ENCODE measurements at regions of chr7 and their contacts with region 1.

Region 1: GRCh38 chr7:148962823-148963582 is 65.3 kb downstream of the PDIA4 start:
- DNase-seq: peak; percentile 46
- H3K4me3 Mint-ChIP-seq: peak overlapping the region; percentile 85
- H3K27ac Mint-ChIP-seq: peak overlapping the region; percentile 46
- H3K4me1 Mint-ChIP-seq: peaks cover 33% of the 10 kb centered on the region
- H3K27me3 Mint-ChIP-seq: peaks cover 3% of the 10 kb centered on the region

Region 2: DNA sequence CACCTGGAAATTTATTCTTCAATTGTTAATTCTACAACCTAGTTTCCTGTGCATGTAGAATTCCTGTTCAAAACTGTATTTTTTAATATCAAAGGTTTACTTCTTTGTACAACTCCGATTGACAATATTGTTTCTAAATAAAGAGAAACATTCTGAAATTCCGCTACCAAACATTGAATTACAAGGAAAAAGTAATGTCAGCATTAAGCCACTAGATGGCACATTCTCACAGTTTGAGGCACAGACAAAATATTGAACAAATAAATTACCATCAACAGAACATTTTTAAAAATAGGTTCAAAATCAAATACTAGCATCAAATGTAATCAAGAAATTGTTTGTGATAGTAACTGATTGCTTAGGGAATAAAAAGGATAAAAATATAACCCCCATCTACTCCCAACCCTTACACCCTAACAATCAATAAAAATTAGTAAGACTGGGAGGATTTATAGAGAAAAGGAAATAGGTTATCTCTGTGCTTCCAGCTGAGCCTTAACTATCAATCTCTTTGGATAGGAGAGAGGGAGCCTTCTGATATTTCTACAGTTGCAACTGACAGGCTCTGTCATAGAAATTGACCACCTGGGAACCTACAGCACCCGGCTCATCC is 459.0 kb before region 1 on chr7:
- intact Hi-C with region 1: loop called (anchors 1 kb)
- DNase-seq: no peak
- H3K4me3 Mint-ChIP-seq: no peak overlapping the region
- H3K27ac Mint-ChIP-seq: no peak overlapping the region
- H3K4me1 Mint-ChIP-seq: peaks cover 7% of the 10 kb centered on the region
- H3K27me3 Mint-ChIP-seq: peaks cover 17% of the 10 kb centered on the region

Region 3: DNA sequence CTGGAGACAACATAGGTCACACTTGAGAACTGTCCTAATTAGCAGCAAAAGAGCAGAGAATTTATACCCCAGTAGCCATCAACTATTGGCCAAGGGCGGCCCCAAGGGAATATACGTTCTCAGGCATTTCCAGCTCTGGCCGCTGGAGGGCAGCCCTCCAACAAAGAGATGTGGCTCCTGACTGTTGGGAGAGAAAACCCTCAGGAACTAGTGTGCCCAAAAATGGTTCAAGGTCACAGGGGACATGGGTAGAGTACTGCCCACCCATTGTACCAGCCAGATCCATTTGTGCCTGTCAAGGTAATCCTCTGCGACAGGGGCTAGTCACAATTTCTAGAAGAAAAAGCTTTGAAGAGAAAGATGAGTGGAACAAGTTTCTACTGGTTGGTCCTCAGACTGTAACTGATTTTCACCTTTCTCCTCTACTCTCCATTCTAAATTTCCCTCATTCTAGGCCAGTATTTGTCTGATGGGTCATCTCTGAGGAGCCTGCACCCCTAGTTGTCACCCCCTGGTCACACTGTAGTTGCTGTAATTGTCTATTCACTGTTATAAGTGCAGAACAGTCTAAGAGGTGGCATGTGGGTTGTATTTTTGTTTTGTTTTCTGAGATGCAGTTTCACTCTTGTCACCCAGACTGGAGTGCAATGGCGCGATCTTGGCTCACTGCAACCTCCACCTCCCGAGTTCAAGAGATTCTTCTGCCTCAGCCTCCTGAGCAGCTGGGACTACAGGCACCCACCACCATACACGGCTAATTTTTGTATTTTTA is 387.2 kb before region 1 on chr7:
- intact Hi-C with region 1: loop called (anchors 1 kb)
- DNase-seq: peak; percentile 47
- H3K4me3 Mint-ChIP-seq: no peak overlapping the region
- H3K27ac Mint-ChIP-seq: no peak overlapping the region
- H3K4me1 Mint-ChIP-seq: peaks cover 24% of the 10 kb centered on the region
- H3K27me3 Mint-ChIP-seq: peaks cover 3% of the 10 kb centered on the region

Region 4: DNA sequence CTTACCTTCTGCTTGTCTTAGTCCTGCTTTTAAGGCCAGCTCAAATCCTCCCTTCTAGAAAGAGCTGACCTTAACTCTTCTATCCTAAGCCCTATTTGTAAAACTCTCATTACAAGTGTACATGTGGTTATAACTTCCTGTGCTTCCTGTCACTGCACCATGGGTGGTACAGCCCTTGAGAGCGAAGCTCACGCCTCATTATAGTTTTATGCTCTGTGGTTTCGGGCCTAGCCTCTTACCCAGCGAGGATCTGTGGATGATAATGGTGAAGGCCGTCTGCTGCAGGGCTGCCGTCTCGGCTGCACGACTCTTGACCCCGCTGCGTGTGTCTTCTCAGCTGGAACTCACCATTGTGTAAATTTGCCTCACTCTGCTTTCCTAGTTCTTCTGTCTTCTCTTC is 189.7 kb before region 1 on chr7:
- intact Hi-C with region 1: loop called (anchors 2 kb)
- DNase-seq: peak; percentile 35
- H3K4me3 Mint-ChIP-seq: no peak overlapping the region
- H3K27ac Mint-ChIP-seq: peak overlapping the region; percentile 54
- H3K4me1 Mint-ChIP-seq: peaks cover 30% of the 10 kb centered on the region
- H3K27me3 Mint-ChIP-seq: no peaks in the 10 kb centered on the region

Region 5: DNA sequence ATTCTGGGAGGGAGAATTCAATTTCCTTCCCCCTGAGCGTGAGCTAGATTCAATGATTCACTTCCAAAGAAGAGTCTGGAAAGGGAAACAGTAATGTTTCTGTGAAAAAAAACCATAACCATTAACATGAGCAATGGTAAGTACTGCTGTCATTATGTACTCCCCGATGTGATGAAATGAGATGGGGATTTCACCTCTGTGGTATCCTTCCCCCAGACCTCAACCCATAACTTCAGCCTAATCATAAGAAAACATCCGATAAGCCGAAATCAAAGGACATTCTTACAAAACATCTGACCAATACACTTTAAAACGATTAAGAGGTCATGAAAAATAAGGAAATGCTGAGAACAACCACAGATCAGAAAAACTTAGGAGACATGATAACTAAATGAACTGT is 106.1 kb before region 1 on chr7:
- intact Hi-C with region 1: loop called (anchors 1 kb)
- DNase-seq: no peak
- H3K4me3 Mint-ChIP-seq: peak overlapping the region; percentile 40
- H3K27ac Mint-ChIP-seq: peak overlapping the region; percentile 85
- H3K4me1 Mint-ChIP-seq: peaks cover 46% of the 10 kb centered on the region
- H3K27me3 Mint-ChIP-seq: no peaks in the 10 kb centered on the region

Region 6: GRCh38 chr7:148914208-148914777 is 48.7 kb before region 1 on chr7:
- intact Hi-C with region 1: loop called (anchors 2 kb)
- DNase-seq: peak; percentile 34
- H3K4me3 Mint-ChIP-seq: peak overlapping the region; percentile 77
- H3K27ac Mint-ChIP-seq: peak overlapping the region; percentile 94
- H3K4me1 Mint-ChIP-seq: peaks cover 63% of the 10 kb centered on the region
- H3K27me3 Mint-ChIP-seq: peaks cover 2% of the 10 kb centered on the region

Region 7: GRCh38 chr7:148987010-148987750 is 24.2 kb after region 1 on chr7:
- intact Hi-C with region 1: loop called (anchors 1 kb)
- DNase-seq: peak; percentile 78
- H3K4me3 Mint-ChIP-seq: peak overlapping the region; percentile 94
- H3K27ac Mint-ChIP-seq: peak overlapping the region; percentile 92
- H3K4me1 Mint-ChIP-seq: peaks cover 46% of the 10 kb centered on the region
- H3K27me3 Mint-ChIP-seq: peaks cover 21% of the 10 kb centered on the region

Region 8: GRCh38 chr7:149097088-149097487 is 134.1 kb after region 1 on chr7:
- intact Hi-C with region 1: no loop called
- DNase-seq: no peak
- H3K4me3 Mint-ChIP-seq: no peak overlapping the region
- H3K27ac Mint-ChIP-seq: no peak overlapping the region
- H3K4me1 Mint-ChIP-seq: no peaks in the 10 kb centered on the region
- H3K27me3 Mint-ChIP-seq: peaks cover 2% of the 10 kb centered on the region

Measured in activated T-helper 1 cell treated with anti-CD3 and anti-CD28 coated beads, Interleukin-12 subunit alpha, Interleukin-12 subunit beta, Interleukin-2, Interleukin-4 antibody, amounts not matched to agents 30 ng/mL and 10 ng/mL and 1 ng/mL, durations not matched to agents 14 hours and 24 hours and 36 hours (primary cell).